Esophagus muscularis mucosa (tissue), 4 donors: ENCODE measurements at regions of chr14 and their contacts with region 1.

Region 1: GRCh38 chr14:53152890-53153701 is at the start of gene DDHD1:
- DNase-seq: peak; percentile 93
- H3K4me3 ChIP-seq: peak within 1 kb of the TSS; percentile 76 to 93 (median 91)
- H3K27ac ChIP-seq: peak within 1 kb of the TSS; percentile 89 to 97 (median 93)
- H3K4me1 ChIP-seq: peaks cover 9 to 32% (median 28%) of the 10 kb centered on the region in 4 donors
- H3K27me3 ChIP-seq: no peaks in the 10 kb centered on the region
- CTCF ChIP-seq: no peak
- EP300 ChIP-seq: no peak
- POLR2A ChIP-seq: no peak
- total RNA-seq, gene DDHD1: 15.4 to 19.9 (median 16.2) TPM

Region 2: GRCh38 chr14:52552063-52552988 is 600.8 kb before region 1 on chr14 and contains the starts of genes GPR137C and TXNDC16:
- intact Hi-C with region 1: loop called (anchors 5 kb)
- DNase-seq: peak; percentile 100
- H3K4me3 ChIP-seq: peak within 1 kb of the TSS; percentile 74 to 91 (median 82)
- H3K27ac ChIP-seq: peak within 1 kb of the TSS; percentile 86 to 96 (median 94)
- H3K4me1 ChIP-seq: peaks cover 17 to 28% (median 28%) of the 10 kb centered on the region in 4 donors
- H3K27me3 ChIP-seq: no peaks in the 10 kb centered on the region
- CTCF ChIP-seq: peak in 1 of 3 experiments; percentile 14
- EP300 ChIP-seq: no peak
- POLR2A ChIP-seq: peak; percentile 64
- total RNA-seq, gene GPR137C: 0.39 to 1.2 (median 0.45) TPM
- total RNA-seq, gene TXNDC16: 6.5 to 12.5 (median 11.8) TPM

Region 3: DNA sequence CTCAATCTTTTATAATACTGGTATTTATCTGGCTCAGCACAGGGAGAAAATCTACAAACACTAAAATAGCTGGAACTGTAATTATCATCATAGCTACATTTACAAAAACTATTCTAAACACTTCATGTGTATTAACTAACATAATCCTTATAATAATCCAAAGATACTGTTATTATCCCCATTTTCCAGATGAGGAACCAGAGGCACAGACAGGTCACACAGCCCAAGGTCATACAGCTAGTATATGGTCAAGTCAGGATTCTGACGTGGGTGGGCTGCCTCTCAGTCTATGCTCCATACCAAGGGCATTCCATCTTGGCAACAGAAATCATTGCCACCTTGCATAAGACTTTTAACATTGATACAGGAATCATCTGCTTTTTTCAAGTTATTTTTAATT is 213.7 kb before region 1 on chr14:
- intact Hi-C with region 1: no loop called
- DNase-seq: no peak
- H3K4me3 ChIP-seq: no peak overlapping the region
- H3K27ac ChIP-seq: peak overlapping the region; percentile 21 to 63 (median 48)
- H3K4me1 ChIP-seq: peaks cover 57 to 100% (median 96%) of the 10 kb centered on the region in 4 donors
- H3K27me3 ChIP-seq: no peaks in the 10 kb centered on the region
- CTCF ChIP-seq: no peak
- EP300 ChIP-seq: no peak
- POLR2A ChIP-seq: no peak

Region 4: DNA sequence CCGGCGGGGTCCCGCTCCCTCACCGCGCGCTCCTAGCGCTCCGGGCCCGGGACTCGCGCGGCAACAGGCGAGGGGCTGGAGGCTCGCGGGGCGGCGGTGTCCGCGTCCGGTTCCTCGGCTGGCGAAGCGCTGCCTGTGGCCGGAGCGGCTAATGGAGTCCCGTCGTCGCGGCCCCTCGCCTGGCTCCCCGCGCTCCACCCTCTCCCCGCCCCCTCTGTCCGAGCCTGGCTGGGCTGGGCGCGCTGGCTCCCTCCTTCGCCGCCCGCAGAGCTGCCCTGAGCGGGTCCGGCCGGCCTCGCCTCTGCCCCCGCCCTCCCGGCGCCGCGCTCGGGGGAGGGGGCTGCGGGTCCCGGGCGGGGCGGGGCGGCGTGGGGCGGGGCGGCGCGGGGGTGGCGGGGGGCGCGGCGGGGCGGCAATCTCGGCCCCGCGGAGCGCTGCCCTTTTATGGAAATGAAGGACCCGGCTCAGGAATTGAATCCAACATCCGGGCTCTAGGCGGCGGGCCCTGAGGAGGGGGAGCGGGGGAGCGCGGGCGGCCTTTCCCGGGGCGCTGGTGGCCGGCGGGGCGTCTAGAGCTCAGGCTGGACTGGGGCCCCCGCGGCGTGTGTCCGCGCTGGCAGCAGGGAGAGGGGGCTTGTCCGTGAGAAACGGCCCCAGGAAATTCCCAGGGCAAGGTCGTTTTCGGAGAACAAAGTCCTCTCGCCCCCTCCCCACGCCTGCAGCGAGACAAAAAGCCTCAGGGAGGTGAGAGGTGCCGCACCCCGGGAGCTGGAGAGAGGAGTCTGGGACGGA is 202.0 kb before region 1 on chr14 and contains the start of gene FERMT2:
- intact Hi-C with region 1: loop called (anchors 10 kb)
- DNase-seq: peak; percentile 94
- H3K4me3 ChIP-seq: peak within 1 kb of the TSS; percentile 86 to 95 (median 92)
- H3K27ac ChIP-seq: peak within 1 kb of the TSS; percentile 99 to 100 (median 99)
- H3K4me1 ChIP-seq: peaks cover 11 to 73% (median 60%) of the 10 kb centered on the region in 4 donors
- H3K27me3 ChIP-seq: no peaks in the 10 kb centered on the region
- CTCF ChIP-seq: no peak
- EP300 ChIP-seq: no peak
- POLR2A ChIP-seq: peak; percentile 75
- total RNA-seq, gene FERMT2: 293 to 397 (median 370) TPM

Region 5: DNA sequence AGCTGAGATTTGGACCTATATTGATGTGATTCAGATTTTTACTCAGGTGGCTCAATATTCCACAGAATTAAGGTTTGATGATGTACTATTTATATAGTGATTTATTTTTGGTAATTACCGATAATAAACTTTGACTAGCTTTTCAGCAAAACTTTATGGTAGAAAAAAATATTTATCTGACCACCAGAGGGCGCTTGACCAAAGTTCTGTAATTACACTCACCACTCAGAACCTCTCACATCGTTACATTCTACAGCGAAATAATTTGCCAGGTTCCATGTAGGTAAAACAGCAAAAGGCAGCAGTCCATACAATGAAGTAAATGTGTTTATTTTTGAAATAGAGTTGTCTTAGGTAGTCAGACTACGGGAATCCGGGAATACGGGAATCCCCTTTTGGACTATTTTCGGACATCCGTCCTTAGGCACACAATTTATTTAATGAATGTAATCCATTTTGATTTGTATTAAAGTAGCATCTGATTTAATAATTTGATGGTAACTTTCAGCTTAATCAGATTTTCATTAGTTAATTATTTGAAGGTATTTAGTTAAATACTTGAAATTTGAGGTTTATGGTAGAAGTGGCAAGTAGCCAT is 143.0 kb after region 1 on chr14:
- intact Hi-C with region 1: loop called (anchors 10 kb)
- DNase-seq: no peak
- H3K4me3 ChIP-seq: no peak overlapping the region
- H3K27ac ChIP-seq: no peak overlapping the region
- H3K4me1 ChIP-seq: no peaks in the 10 kb centered on the region
- H3K27me3 ChIP-seq: no peaks in the 10 kb centered on the region
- CTCF ChIP-seq: peak; percentile 56 to 71 (median 68)
- EP300 ChIP-seq: no peak
- POLR2A ChIP-seq: no peak